PC-9 (cell line): ENCODE measurements at regions of chr7 and their contacts with region 1.

Region 1: DNA sequence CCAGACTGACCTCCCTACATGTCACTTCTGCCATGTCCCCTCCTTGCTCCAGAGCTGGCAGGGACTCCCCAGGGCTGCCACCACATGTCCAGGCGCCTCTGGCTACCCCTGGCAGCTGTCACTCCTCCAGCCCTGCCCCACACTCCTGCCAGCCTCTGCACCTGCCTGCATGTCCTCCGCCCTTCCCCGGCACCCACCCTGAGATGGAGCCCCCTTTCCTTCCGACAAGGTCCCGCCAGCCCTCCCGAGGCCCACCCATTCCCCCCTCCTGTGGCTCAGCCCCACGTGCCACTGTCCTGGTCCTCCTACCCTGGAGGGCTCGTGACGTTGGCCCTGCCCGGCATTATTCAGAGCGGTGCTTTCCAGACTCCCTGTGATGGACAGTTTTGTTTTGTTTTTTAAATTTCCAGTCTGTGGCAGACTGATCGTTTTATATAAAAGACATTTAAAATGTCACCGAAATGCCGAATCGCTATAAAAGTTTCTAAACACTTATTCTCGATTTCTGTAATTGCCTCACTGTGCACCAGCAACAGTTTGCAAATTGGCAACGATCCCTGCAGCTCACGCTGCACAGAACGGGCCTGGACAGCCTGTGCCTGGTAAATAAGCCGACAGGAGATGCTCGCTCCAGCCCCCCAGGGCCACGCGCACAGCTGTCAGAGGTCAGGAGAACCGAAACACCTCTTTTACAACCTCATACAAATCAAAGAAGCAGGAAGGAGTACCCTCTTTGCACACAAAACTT is 111.1 kb upstream of the SH2B2 start:
- DNase-seq: no peak
- H3K4me3 ChIP-seq: no peak overlapping the region
- H3K27ac ChIP-seq: no peak overlapping the region
- H3K4me1 ChIP-seq: no peaks in the 10 kb centered on the region
- H3K27me3 ChIP-seq: no peaks in the 10 kb centered on the region
- CTCF ChIP-seq: no peak

Region 2: GRCh38 chr7:100773491-100773890 is 1402.1 kb before region 1 on chr7:
- CTCF ChIA-PET with region 1: no interaction called
- POLR2A ChIA-PET with region 1: interaction called, 21 read pairs
- intact Hi-C with region 1: no loop called
- DNase-seq: no peak
- H3K4me3 ChIP-seq: no peak overlapping the region
- H3K27ac ChIP-seq: no peak overlapping the region
- H3K4me1 ChIP-seq: no peaks in the 10 kb centered on the region
- H3K27me3 ChIP-seq: no peaks in the 10 kb centered on the region
- CTCF ChIP-seq: no peak